Breast epithelium (tissue), 4 donors: ENCODE measurements at regions of chr2 and their contacts with region 1.

Region 1: GRCh38 chr2:39436592-39437510 is at the start of gene MAP4K3:
- DNase-seq: peak; percentile 89
- H3K4me3 ChIP-seq: peak within 1 kb of the TSS; percentile 85 to 93 (median 85)
- H3K27ac ChIP-seq: peak within 1 kb of the TSS; percentile 96 to 98
- H3K4me1 ChIP-seq: peaks cover 0 to 22% of the 10 kb centered on the region in 2 donors
- H3K27me3 ChIP-seq: no peaks in the 10 kb centered on the region
- CTCF ChIP-seq: no peak
- POLR2A ChIP-seq: peak; percentile 70
- total RNA-seq, gene MAP4K3: 56.2 to 101 (median 69.8) TPM

Region 2: GRCh38 chr2:38301340-38301968 is 1135.4 kb before region 1 on chr2:
- intact Hi-C with region 1: loop called (anchors 10 kb)
- DNase-seq: no peak
- H3K4me3 ChIP-seq: no peak overlapping the region
- H3K27ac ChIP-seq: peak overlapping the region in 1 of 2 donors; percentile 5
- H3K4me1 ChIP-seq: no peaks in the 10 kb centered on the region
- H3K27me3 ChIP-seq: no peaks in the 10 kb centered on the region
- CTCF ChIP-seq: no peak
- POLR2A ChIP-seq: no peak